ENCODE measurements at regions of chr11 and their contacts with region 1.

Region 1: GRCh38 chr11:95835768-95836488 is 45.6 kb downstream of the CEP57 start:
- DNase-seq: peak in 7 of 10 donors; percentile 42 to 77 (median 50)
- H3K4me3 ChIP-seq: no peak overlapping the region
- H3K27ac ChIP-seq: peak overlapping the region in 52 of 59 donors; percentile 6 to 82 (median 58)
- H3K27me3 ChIP-seq: no peaks in the 10 kb centered on the region
- CTCF ChIP-seq: peak; percentile 67 to 96 (median 85)

Region 2: GRCh38 chr11:95592471-95592870 is 243.5 kb before region 1 on chr11:
- intact Hi-C with region 1: no loop called
- DNase-seq: peak in 1 of 10 donors; percentile 28
- H3K4me3 ChIP-seq: no peak overlapping the region
- H3K27ac ChIP-seq: peak overlapping the region in 45 of 59 donors; percentile 2 to 74 (median 53)
- H3K27me3 ChIP-seq: no peaks in the 10 kb centered on the region
- CTCF ChIP-seq: no peak

Region 3: GRCh38 chr11:95968585-95968984 is 132.7 kb after region 1 on chr11:
- intact Hi-C with region 1: loop called in 1 of 2 experiments (anchors 5 kb)
- DNase-seq: no peak
- H3K4me3 ChIP-seq: no peak overlapping the region
- H3K27ac ChIP-seq: no peak overlapping the region
- H3K27me3 ChIP-seq: no peaks in the 10 kb centered on the region
- CTCF ChIP-seq: peak in 49 of 56 donors; percentile 10 to 69 (median 42)

Region 4: DNA sequence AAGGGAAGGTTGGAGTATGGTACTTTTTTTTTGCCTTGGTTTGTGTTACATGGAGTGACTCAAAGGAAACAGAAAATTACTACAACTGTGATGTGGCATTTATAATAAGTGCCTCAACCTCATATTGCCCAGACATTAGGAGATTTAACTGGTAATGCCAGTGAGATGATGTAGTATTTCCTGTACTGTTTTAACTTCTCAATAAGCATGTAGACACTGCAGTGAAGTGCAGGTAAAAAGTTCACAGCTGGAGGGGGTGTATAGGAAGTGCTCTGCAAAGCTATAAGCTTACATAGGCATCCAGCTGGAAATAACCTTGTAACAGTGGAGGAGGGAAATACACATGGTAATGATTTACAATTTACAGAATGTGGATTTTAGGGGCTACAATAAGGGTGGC is 226.2 kb after region 1 on chr11:
- intact Hi-C with region 1: loop called (anchors 10 kb)
- DNase-seq: no peak
- H3K4me3 ChIP-seq: no peak overlapping the region
- H3K27ac ChIP-seq: no peak overlapping the region
- H3K27me3 ChIP-seq: no peaks in the 10 kb centered on the region
- CTCF ChIP-seq: no peak

Region 5: DNA sequence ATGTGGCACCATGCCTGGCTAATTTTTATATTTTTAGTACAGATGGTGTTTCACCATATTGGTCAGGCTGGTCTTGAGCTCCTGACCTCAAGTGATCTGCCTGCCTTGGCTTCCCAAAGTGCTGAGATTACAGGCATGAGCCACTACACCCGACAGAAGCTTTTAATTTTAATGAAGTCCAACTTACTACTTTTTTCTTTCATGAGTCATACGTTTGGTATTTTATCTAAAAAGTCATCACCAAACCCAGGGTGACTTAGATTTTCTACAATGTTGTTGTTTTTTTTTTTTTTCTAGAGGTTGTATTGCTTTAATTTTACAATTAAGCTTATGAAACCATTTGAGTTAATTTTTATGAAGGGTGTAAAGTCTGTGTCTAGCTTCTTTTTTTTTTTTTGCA is 588.8 kb after region 1 on chr11:
- intact Hi-C with region 1: loop called in 1 of 2 experiments (anchors 10 kb)
- DNase-seq: no peak
- H3K4me3 ChIP-seq: no peak overlapping the region
- H3K27ac ChIP-seq: no peak overlapping the region
- H3K27me3 ChIP-seq: no peaks in the 10 kb centered on the region
- CTCF ChIP-seq: no peak